CD8-positive, alpha-beta T cell (primary cell): ENCODE measurements at regions of chr1 and their contacts with region 1.

Region 1: DNA sequence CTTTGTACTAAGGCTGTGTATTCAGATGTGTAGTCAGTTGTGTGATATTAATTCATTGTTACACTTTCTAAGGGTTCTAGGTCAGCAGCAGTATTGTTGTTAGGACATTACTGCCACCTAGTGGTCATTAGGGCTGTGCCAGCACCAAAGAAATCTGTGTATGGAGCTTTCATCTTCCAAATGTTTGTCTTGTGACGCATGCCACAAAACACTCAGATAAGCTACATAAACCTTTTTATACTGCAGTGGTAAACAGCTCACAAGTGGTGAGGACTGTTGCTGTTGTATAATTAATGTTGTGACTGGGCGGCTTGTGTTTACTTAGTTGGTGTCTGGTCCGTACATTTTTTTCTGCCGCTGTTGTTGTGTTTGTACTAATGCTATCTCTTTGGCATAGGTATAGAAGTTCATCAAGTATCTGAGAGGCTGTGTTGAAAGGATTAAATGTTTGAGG is 51.7 kb downstream of the S1PR1 start:
- DNase-seq: peak; percentile 39 to 89 (median 73)
- ATAC-seq: peak; percentile 66
- H3K4me3 ChIP-seq: no peak overlapping the region
- H3K4me3 Mint-ChIP-seq: no peak overlapping the region
- H3K27ac ChIP-seq: peak overlapping the region in 1 of 2 experiments; percentile 40
- H3K27ac Mint-ChIP-seq: peak overlapping the region; percentile 86
- H3K4me1 ChIP-seq: peaks cover 69% of the 10 kb centered on the region
- H3K4me1 Mint-ChIP-seq: peaks cover 73% of the 10 kb centered on the region
- H3K27me3 ChIP-seq: no peaks in the 10 kb centered on the region
- H3K27me3 Mint-ChIP-seq: no peaks in the 10 kb centered on the region
- CTCF ChIP-seq: peak; percentile 93

Region 2: DNA sequence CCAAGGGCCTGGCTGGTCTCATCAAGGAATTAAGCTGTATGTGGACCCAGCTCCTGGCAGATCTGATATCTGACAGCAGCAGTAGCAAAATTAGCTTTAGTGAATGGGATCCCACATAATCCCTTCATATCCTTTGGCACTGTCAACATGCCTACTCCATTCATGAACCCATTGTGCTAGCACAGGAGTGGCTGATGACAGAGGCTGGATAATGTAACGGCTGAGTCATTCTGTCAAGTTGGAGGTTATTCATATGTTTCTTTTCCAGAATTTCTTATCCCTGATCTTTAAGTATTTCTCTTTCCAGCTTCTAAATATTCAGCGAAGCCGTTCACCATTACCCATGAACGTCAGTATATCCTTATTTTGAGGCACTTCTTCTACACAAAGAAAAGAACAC is 478.2 kb before region 1 on chr1:
- CTCF ChIA-PET with region 1: no interaction called
- POLR2A ChIA-PET with region 1: no interaction called
- intact Hi-C with region 1: no loop called
- DNase-seq: no peak
- ATAC-seq: no peak
- H3K4me3 ChIP-seq: no peak overlapping the region
- H3K4me3 Mint-ChIP-seq: no peak overlapping the region
- H3K27ac ChIP-seq: no peak overlapping the region
- H3K27ac Mint-ChIP-seq: no peak overlapping the region
- H3K4me1 ChIP-seq: no peaks in the 10 kb centered on the region
- H3K4me1 Mint-ChIP-seq: peaks cover 3% of the 10 kb centered on the region
- H3K27me3 ChIP-seq: no peaks in the 10 kb centered on the region
- H3K27me3 Mint-ChIP-seq: peaks cover 15% of the 10 kb centered on the region
- CTCF ChIP-seq: no peak

Region 3: DNA sequence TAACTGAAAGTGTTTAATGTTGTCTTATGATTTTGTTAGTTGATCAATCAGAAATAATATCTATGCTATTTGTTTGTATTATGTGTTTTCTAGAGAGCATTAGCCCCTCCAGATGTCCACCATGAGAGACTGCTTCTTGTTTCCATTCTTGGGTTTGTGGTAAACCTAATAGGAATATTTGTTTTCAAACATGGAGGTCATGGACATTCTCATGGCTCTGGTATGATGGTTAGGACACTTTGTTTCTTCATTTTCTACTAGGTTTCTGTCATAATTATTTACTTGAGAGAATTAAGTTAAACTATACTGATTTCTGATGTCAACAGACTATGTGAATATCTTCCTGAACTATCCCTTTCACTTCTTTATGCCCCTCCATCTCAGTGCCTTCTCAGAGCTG is 376.5 kb before region 1 on chr1:
- CTCF ChIA-PET with region 1: interaction called, 30 read pairs
- POLR2A ChIA-PET with region 1: no interaction called
- intact Hi-C with region 1: no loop called
- DNase-seq: no peak
- ATAC-seq: no peak
- H3K4me3 ChIP-seq: no peak overlapping the region
- H3K4me3 Mint-ChIP-seq: no peak overlapping the region
- H3K27ac ChIP-seq: no peak overlapping the region
- H3K27ac Mint-ChIP-seq: peak overlapping the region; percentile 23
- H3K4me1 ChIP-seq: no peaks in the 10 kb centered on the region
- H3K4me1 Mint-ChIP-seq: peaks cover 41% of the 10 kb centered on the region
- H3K27me3 ChIP-seq: no peaks in the 10 kb centered on the region
- H3K27me3 Mint-ChIP-seq: no peaks in the 10 kb centered on the region
- CTCF ChIP-seq: no peak

Region 4: DNA sequence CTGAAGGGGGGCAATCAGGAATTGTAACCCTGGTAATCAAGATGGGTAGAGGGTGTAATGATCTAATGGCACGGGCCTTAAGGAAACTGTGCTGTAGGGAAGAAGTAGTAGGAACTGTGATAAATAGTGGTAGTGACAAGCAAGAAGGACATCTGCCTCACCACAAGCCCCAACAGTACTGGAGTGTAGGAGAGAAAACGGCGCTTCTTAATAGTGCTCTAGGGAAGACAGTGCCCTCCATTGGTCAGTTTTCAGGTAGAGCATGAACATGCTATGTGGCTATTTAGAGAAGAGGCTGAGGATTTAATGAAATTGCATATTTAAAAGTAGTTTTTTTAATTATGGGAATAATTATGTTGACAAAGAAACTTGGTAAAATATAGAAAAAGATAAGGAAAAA is 360.4 kb before region 1 on chr1:
- CTCF ChIA-PET with region 1: interaction called, 37 read pairs
- POLR2A ChIA-PET with region 1: interaction called, 4 read pairs
- intact Hi-C with region 1: loop called in 1 of 2 experiments (anchors 1 kb)
- DNase-seq: peak in 3 of 9 experiments; percentile 19 to 65 (median 48)
- ATAC-seq: no peak
- H3K4me3 ChIP-seq: peak overlapping the region in 1 of 2 experiments; percentile 13
- H3K4me3 Mint-ChIP-seq: no peak overlapping the region
- H3K27ac ChIP-seq: peak overlapping the region; percentile 40 to 78
- H3K27ac Mint-ChIP-seq: no peak overlapping the region
- H3K4me1 ChIP-seq: peaks cover 85% of the 10 kb centered on the region
- H3K4me1 Mint-ChIP-seq: peaks cover 45% of the 10 kb centered on the region
- H3K27me3 ChIP-seq: no peaks in the 10 kb centered on the region
- H3K27me3 Mint-ChIP-seq: no peaks in the 10 kb centered on the region
- CTCF ChIP-seq: no peak

Region 5: DNA sequence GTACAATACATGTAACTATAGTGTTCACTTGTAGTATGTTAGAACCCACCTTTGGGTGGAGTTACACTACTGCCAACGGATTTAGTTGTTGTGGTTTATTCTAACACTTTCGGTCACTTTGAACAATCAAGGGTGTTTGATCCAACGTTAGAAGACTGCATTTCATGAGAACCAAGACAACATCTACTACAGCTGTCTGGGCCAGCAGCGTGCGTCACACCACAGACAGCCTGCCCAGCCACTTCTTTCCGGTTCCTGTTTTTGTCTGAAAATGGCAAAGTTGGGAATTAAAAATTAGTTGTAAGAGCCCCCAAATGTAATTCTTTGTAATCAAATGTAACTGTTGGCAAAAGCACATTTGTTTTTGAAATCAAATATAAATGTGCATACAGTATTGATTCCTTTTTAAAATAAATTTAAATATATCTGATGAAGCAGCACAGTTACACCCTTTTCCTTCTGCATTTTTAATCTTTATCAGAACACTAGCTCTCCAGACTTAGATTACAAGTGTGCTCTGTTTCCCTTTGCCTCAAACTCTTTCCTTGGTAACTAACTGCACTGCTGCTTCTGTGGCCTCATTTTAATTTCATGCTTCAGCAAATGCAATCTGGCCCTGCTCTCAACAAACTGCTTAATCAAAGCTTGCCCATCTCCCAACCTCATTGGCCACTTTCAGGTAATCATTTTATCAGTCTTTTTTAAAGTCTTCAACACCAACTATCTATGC is 176.3 kb before region 1 on chr1:
- CTCF ChIA-PET with region 1: interaction called, 14 read pairs
- POLR2A ChIA-PET with region 1: interaction called, 3 read pairs
- intact Hi-C with region 1: loop called in 1 of 2 experiments (anchors 1 kb)
- DNase-seq: peak; percentile 53 to 96 (median 73)
- ATAC-seq: peak; percentile 89
- H3K4me3 ChIP-seq: peak overlapping the region in 1 of 2 experiments; percentile 23
- H3K4me3 Mint-ChIP-seq: peak overlapping the region; percentile 66
- H3K27ac ChIP-seq: peak overlapping the region; percentile 84 to 93
- H3K27ac Mint-ChIP-seq: peak overlapping the region; percentile 99
- H3K4me1 ChIP-seq: peaks cover 42% of the 10 kb centered on the region
- H3K4me1 Mint-ChIP-seq: peaks cover 64% of the 10 kb centered on the region
- H3K27me3 ChIP-seq: no peaks in the 10 kb centered on the region
- H3K27me3 Mint-ChIP-seq: no peaks in the 10 kb centered on the region
- CTCF ChIP-seq: no peak

Region 6: DNA sequence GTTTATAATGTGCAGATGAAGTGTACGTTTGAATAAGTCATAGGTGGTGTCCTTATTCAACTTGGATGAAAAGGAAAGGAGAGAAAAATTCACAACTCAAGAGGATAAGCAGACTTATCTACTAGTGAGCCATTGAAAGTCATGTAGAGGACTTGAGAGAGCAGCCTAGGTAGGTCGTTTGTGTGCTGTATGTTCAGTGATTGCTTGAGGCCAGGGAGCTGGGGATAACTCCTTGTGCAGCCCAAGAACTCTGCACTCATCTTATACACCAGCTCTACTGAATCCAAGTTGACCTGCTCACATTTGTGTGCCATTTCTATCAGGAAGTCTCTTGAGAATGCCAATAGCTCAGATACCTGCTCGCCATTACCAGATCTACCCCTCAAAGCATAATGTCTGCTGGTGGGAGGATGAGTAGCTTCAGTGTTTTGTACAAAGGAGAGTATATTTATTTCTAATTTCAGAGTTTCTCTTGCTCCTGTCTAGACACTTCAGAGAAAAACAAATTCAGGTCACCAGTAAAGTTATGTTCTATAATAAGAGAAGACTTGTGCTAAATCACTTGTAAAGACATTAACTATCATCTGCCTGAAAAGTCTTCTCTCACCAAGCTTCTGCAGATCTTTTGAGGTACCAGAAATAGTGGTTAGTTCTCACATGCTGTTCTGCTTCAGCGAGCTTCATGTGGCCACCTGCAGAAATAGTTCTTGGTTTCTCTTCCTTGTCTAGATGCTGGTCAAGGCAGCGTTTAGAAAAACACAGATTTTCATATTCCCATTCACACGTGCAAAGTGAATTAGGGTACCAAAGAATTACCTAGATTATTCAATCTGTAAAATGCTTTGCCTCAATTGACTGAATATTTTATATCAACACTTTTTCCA is 40.9 kb before region 1 on chr1:
- CTCF ChIA-PET with region 1: interaction called, 405 read pairs
- POLR2A ChIA-PET with region 1: interaction called, 8 read pairs
- intact Hi-C with region 1: no loop called
- DNase-seq: peak in 2 of 9 experiments; percentile 23 to 48
- ATAC-seq: peak; percentile 32
- H3K4me3 ChIP-seq: no peak overlapping the region
- H3K4me3 Mint-ChIP-seq: no peak overlapping the region
- H3K27ac ChIP-seq: peak overlapping the region in 1 of 2 experiments; percentile 34
- H3K27ac Mint-ChIP-seq: peak overlapping the region; percentile 83
- H3K4me1 ChIP-seq: peaks cover 65% of the 10 kb centered on the region
- H3K4me1 Mint-ChIP-seq: peaks cover 72% of the 10 kb centered on the region
- H3K27me3 ChIP-seq: no peaks in the 10 kb centered on the region
- H3K27me3 Mint-ChIP-seq: no peaks in the 10 kb centered on the region
- CTCF ChIP-seq: no peak

Region 7: DNA sequence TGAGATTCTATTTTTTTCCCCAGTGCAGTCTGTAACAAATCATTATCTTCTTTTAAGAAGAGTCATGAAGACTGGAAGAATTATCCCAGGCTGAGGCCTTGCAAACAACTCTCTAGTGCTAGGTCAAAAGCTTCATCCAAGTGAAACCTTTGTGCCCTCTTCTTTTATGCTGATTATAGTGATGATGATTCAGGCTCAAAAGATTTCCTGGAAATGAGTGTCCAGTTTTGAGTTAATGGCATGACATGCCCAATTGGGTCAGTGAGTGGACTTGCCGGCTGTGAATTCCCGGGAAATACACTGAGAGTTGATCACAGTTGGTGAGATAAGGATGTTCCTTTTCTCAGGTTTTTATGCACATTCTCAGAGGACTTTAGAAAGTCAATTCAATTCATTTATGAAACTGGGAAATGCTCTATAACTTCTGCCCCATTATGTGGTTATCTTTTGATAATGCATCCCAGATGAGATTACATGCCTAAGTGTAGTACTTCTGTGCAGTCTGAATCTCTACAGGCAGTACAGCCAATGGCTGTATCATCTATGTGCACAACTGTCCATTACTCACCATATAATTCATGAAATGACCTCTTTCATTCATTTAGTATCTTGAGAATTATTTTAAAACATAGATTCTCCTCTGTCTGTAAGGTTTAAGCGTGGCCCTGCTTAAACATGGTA is 14.5 kb after region 1 on chr1:
- CTCF ChIA-PET with region 1: interaction called, 61 read pairs
- POLR2A ChIA-PET with region 1: no interaction called
- intact Hi-C with region 1: no loop called
- DNase-seq: no peak
- ATAC-seq: no peak
- H3K4me3 ChIP-seq: no peak overlapping the region
- H3K4me3 Mint-ChIP-seq: no peak overlapping the region
- H3K27ac ChIP-seq: no peak overlapping the region
- H3K27ac Mint-ChIP-seq: no peak overlapping the region
- H3K4me1 ChIP-seq: peaks cover 9% of the 10 kb centered on the region
- H3K4me1 Mint-ChIP-seq: peaks cover 18% of the 10 kb centered on the region
- H3K27me3 ChIP-seq: no peaks in the 10 kb centered on the region
- H3K27me3 Mint-ChIP-seq: no peaks in the 10 kb centered on the region
- CTCF ChIP-seq: no peak

Region 8: DNA sequence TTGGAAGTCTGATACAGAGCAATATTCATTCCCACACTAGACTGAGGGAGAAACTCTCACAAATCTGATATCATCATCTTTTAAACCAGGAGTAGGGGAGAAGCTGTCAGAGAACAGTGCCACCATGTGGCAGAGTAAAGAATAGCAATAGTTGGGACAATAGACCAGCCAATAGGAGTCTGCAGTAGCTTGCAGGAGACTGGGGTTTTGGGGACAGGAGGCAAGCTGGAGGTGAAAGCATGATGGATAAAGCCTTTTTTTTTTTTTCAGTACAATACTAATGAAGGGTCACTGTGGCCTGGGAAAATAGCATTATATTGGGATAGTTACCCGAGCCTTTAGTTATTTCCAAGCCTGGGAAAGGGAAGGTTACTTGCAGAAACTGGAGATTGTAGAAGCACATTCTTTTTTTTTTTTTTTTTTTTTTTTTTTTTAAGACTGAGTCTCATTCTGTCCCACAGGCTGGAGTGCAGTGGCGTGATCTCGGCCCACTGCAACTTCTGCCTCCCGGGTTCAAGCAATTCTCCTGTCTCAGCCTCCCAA is 69.0 kb after region 1 on chr1:
- CTCF ChIA-PET with region 1: interaction called, 21 read pairs
- POLR2A ChIA-PET with region 1: interaction called, 7 read pairs
- intact Hi-C with region 1: no loop called
- DNase-seq: peak; percentile 38 to 92 (median 67)
- ATAC-seq: peak; percentile 100
- H3K4me3 ChIP-seq: no peak overlapping the region
- H3K4me3 Mint-ChIP-seq: no peak overlapping the region
- H3K27ac ChIP-seq: no peak overlapping the region
- H3K27ac Mint-ChIP-seq: peak overlapping the region; percentile 28
- H3K4me1 ChIP-seq: peaks cover 6% of the 10 kb centered on the region
- H3K4me1 Mint-ChIP-seq: peaks cover 8% of the 10 kb centered on the region
- H3K27me3 ChIP-seq: no peaks in the 10 kb centered on the region
- H3K27me3 Mint-ChIP-seq: peaks cover 3% of the 10 kb centered on the region
- CTCF ChIP-seq: peak; percentile 87

Region 9: GRCh38 chr1:102630041-102630440 is 1341.5 kb after region 1 on chr1:
- CTCF ChIA-PET with region 1: no interaction called
- POLR2A ChIA-PET with region 1: no interaction called
- intact Hi-C with region 1: no loop called
- DNase-seq: no peak
- ATAC-seq: no peak
- H3K4me3 ChIP-seq: no peak overlapping the region
- H3K4me3 Mint-ChIP-seq: no peak overlapping the region
- H3K27ac ChIP-seq: no peak overlapping the region
- H3K27ac Mint-ChIP-seq: no peak overlapping the region
- H3K4me1 ChIP-seq: no peaks in the 10 kb centered on the region
- H3K4me1 Mint-ChIP-seq: no peaks in the 10 kb centered on the region
- H3K27me3 ChIP-seq: no peaks in the 10 kb centered on the region
- H3K27me3 Mint-ChIP-seq: no peaks in the 10 kb centered on the region
- CTCF ChIP-seq: no peak